Endothelial cell of umbilical vein (primary cell): ENCODE measurements at regions of chr5 and their contacts with region 1.

Region 1: GRCh38 chr5:145834917-145835847 is at the start of gene PRELID2:
- DNase-seq: peak; percentile 87
- H3K4me3 ChIP-seq: peak within 1 kb of the TSS; percentile 60 to 79 (median 69)
- H3K27ac ChIP-seq: peak within 1 kb of the TSS; percentile 65
- H3K4me1 ChIP-seq: peaks cover 26% of the 10 kb centered on the region
- H3K27me3 ChIP-seq: no peaks in the 10 kb centered on the region
- CTCF ChIP-seq: no peak
- POLR2A ChIP-seq: peak; percentile 43
- total RNA-seq, gene PRELID2: 14.9 and 16.4 TPM in 2 replicates

Region 2: DNA sequence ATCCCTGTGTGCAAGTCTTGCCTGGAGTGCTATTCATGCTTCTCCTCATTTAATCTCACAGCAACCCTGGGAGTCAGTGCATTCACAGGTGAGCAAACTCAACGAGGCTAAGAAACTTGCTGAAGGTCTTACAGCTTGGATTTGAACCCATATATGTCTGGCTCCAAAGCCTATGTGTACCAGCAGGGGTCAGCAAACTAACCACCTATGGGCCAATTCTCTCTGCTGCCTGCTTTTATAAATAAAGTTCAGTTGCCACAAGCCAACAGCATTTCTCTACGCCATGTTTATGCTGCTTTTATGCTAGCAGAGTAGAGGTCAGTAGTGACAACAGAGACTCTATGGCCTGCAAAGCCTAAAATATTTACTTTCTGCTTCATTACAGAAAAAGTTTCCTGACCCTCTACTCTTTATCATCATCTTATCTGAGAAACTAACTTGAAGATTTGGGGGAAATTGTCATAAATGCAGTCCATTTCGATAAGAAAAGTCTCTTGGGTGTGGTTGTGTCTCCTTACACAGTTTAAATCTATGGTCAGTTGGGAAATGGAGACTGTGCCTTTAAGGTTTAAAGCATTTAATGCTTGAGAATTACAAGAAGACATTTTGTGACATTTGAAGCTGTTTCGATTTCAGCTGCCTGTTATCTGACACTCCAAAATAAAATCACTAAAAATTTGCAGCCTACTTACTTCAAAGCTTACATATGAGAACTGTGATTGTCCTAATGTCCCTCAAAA is 137.8 kb before region 1 on chr5:
- CTCF ChIA-PET with region 1: interaction called, 17 read pairs
- POLR2A ChIA-PET with region 1: interaction called, 4 read pairs
- dilution Hi-C with region 1: no loop called
- intact Hi-C with region 1: no loop called
- DNase-seq: peak; percentile 68
- H3K4me3 ChIP-seq: no peak overlapping the region
- H3K27ac ChIP-seq: no peak overlapping the region
- H3K4me1 ChIP-seq: no peaks in the 10 kb centered on the region
- H3K27me3 ChIP-seq: no peaks in the 10 kb centered on the region
- CTCF ChIP-seq: peak; percentile 61 to 74
- POLR2A ChIP-seq: no peak

Region 3: GRCh38 chr5:145847499-145848497 is 12.6 kb after region 1 on chr5:
- CTCF ChIA-PET with region 1: interaction called, 13 read pairs
- POLR2A ChIA-PET with region 1: no interaction called
- dilution Hi-C with region 1: no loop called
- intact Hi-C with region 1: no loop called
- DNase-seq: no peak
- H3K4me3 ChIP-seq: no peak overlapping the region
- H3K27ac ChIP-seq: no peak overlapping the region
- H3K4me1 ChIP-seq: peaks cover 9% of the 10 kb centered on the region
- H3K27me3 ChIP-seq: no peaks in the 10 kb centered on the region
- CTCF ChIP-seq: no peak
- POLR2A ChIP-seq: no peak

Region 4: GRCh38 chr5:145936401-145937131 is 101.4 kb after region 1 on chr5 and contains the start of gene SH3RF2:
- CTCF ChIA-PET with region 1: no interaction called
- POLR2A ChIA-PET with region 1: no interaction called
- dilution Hi-C with region 1: no loop called
- intact Hi-C with region 1: loop called (anchors 2 kb)
- DNase-seq: peak; percentile 86
- H3K4me3 ChIP-seq: peak within 1 kb of the TSS; percentile 0 to 53 (median 38)
- H3K27ac ChIP-seq: no peak within 1 kb of the TSS
- H3K4me1 ChIP-seq: peaks cover 12% of the 10 kb centered on the region
- H3K27me3 ChIP-seq: peaks cover 0 to 11% of the 10 kb centered on the region in 2 experiments
- CTCF ChIP-seq: no peak
- POLR2A ChIP-seq: no peak
- total RNA-seq, gene SH3RF2: 0.84 and 0.90 TPM in 2 replicates

Region 5: GRCh38 chr5:146049014-146049703 is 214.0 kb after region 1 on chr5:
- CTCF ChIA-PET with region 1: interaction called, 11 read pairs
- POLR2A ChIA-PET with region 1: no interaction called
- dilution Hi-C with region 1: no loop called
- intact Hi-C with region 1: loop called (anchors 1 kb)
- DNase-seq: peak; percentile 74
- H3K4me3 ChIP-seq: no peak overlapping the region
- H3K27ac ChIP-seq: no peak overlapping the region
- H3K4me1 ChIP-seq: no peaks in the 10 kb centered on the region
- H3K27me3 ChIP-seq: peaks cover 0 to 7% of the 10 kb centered on the region in 2 experiments
- CTCF ChIP-seq: peak; percentile 75
- POLR2A ChIP-seq: no peak